AG04449 (cell line): ENCODE measurements at regions of chr10 and their contacts with region 1.

Region 1: GRCh38 chr10:92965314-92965713 is 95.3 kb upstream of the CYP26C1 start:
- DNase-seq: no peak
- H3K4me3 ChIP-seq: no peak overlapping the region
- CTCF ChIP-seq: no peak

Region 2: DNA sequence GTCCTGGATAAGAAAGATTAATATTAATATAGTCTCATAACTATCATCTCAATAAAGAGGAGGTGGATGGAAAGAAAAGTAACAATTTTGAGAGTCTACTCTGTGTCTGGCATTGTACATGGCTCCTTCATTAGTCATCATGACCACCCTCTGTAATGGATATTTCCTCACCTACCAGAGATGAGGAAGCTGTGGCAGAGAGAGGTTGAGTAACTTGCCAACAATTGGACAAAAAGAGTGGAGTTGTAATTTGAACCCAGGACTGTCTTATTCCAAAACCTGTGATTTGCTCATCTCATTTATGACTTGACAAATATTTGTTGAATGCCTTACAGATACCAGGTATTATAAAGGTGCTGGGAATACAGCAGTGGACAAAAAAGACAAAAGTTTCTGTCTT is 389.4 kb before region 1 on chr10:
- CTCF ChIA-PET with region 1: no interaction called
- POLR2A ChIA-PET with region 1: no interaction called
- DNase-seq: no peak
- H3K4me3 ChIP-seq: no peak overlapping the region
- CTCF ChIP-seq: no peak

Region 3: DNA sequence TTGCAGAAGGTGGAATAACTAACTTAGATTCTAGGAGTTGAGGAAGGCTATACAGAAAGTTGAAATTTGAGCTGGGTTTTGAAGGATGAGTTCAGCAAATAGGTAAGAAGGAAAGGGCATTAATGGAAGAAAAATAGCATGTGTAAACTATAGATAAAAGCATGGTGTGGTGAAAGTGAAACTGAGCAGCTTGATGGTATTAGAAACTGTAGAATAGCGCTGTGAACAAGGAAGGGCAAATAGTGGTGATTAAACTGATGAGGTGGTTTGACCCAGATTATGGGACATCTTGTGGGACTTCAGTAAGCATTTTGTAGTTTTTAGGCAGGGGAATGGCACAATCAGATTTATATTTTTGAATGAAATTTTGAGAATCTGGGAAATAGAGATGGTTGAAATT is 26.5 kb before region 1 on chr10:
- CTCF ChIA-PET with region 1: interaction called, 11 read pairs
- POLR2A ChIA-PET with region 1: no interaction called
- DNase-seq: no peak
- H3K4me3 ChIP-seq: no peak overlapping the region
- CTCF ChIP-seq: no peak

Region 4: DNA sequence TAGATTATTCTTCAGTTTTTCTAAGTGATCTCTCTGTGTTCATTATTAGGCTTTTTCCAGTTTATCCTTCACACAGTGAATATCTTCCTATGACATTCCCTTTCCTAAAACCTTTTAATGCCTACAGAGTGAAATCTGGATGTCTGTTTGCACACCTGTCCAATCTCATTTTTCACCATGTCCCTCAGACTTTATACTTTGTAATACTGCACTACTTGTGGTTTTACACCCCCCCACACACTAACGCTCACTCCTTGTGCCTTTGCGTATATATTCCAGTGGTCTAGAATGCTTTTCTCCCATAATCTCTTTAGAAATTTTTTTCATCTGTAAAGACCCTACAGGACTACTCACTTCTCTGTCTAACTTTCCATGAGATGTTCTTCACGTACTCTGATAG is 18.8 kb before region 1 on chr10:
- CTCF ChIA-PET with region 1: interaction called, 10 read pairs
- POLR2A ChIA-PET with region 1: no interaction called
- DNase-seq: no peak
- H3K4me3 ChIP-seq: no peak overlapping the region
- CTCF ChIP-seq: no peak

Region 5: GRCh38 chr10:92990615-92991014 is 25.3 kb after region 1 on chr10:
- CTCF ChIA-PET with region 1: interaction called, 11 read pairs
- POLR2A ChIA-PET with region 1: no interaction called
- DNase-seq: no peak
- H3K4me3 ChIP-seq: no peak overlapping the region
- CTCF ChIP-seq: no peak

Region 6: GRCh38 chr10:92997620-92998019 is 32.3 kb after region 1 on chr10:
- CTCF ChIA-PET with region 1: interaction called, 20 read pairs
- POLR2A ChIA-PET with region 1: no interaction called
- DNase-seq: no peak
- H3K4me3 ChIP-seq: no peak overlapping the region
- CTCF ChIP-seq: no peak

Region 7: DNA sequence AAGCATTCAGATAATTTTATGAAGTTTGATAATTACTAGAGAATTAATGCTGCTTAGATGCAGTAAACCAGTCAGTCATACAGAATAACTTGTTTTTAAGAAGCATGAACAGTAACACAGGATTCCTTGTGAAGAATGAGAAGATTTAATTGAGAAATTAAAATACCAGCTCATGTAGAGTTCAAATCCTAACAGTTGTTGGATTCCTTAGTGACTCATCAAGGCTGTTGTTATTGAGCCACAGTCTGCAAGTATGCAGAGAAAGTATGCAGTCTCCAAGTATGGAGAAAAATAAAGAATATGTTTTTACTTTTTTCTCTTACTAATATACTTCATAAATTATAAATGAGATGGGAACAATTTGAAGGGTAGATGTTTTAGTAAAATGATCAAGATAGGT is 65.1 kb after region 1 on chr10:
- CTCF ChIA-PET with region 1: interaction called, 18 read pairs
- POLR2A ChIA-PET with region 1: no interaction called
- DNase-seq: peak; percentile 59
- H3K4me3 ChIP-seq: no peak overlapping the region
- CTCF ChIP-seq: no peak

Region 8: GRCh38 chr10:93039721-93040120 is 74.4 kb after region 1 on chr10:
- CTCF ChIA-PET with region 1: interaction called, 37 read pairs
- POLR2A ChIA-PET with region 1: no interaction called
- DNase-seq: no peak
- H3K4me3 ChIP-seq: no peak overlapping the region
- CTCF ChIP-seq: peak; percentile 76

Region 9: DNA sequence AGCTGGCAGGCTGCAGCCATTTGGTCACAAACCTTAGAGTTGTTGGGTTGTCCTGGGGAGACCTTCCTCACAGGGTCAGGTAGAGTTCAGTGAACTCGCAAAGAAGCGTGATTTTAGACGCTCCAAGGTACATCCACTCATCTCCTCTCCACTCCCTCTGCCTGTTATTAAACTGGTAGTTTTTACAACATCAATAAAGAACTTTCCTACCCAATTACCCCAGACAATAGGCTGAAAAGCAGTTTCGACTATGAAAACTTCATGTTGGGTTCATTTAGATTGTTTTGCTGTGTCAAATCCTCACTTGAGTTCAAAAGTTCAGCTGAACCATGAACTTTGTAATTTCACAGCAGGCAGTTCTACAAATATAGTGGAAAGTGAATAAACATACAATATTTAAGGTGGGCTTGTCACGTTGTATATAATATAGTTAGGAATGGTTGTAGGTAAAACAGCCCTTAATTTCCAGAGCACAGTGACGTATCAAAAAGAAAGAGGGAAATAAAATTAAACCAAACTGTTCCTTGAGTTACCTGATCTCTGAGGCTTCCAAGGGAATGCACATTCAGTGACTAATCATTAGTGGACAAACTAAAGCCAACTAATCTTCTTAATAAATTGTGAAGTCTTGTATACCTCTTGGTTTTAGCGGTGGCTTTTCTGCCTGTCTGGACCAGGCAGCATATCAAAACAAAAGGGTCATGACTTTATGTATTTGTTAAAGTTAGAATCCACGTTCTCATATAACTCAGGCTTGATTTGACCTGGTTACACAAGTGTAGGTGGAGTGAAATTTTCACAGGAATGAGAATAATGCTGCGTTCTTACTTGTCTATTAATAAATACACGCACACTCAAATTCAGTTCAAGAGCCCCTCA is 208.9 kb after region 1 on chr10:
- CTCF ChIA-PET with region 1: no interaction called
- POLR2A ChIA-PET with region 1: no interaction called
- DNase-seq: no peak
- H3K4me3 ChIP-seq: no peak overlapping the region
- CTCF ChIP-seq: no peak